Panc1 (cell line): ENCODE measurements at regions of chr2 and their contacts with region 1.

Region 1: GRCh38 chr2:42764901-42765300 is 966 bp upstream of the OXER1 start:
- DNase-seq: no peak
- ATAC-seq: no peak
- H3K4me3 ChIP-seq: no peak overlapping the region
- H3K27ac ChIP-seq: no peak overlapping the region
- H3K4me1 ChIP-seq: no peaks in the 10 kb centered on the region
- H3K27me3 ChIP-seq: no peaks in the 10 kb centered on the region
- CTCF ChIP-seq: no peak

Region 2: GRCh38 chr2:42663106-42663780 is 101.7 kb before region 1 on chr2:
- CTCF ChIA-PET with region 1: no interaction called
- POLR2A ChIA-PET with region 1: no interaction called
- in situ Hi-C with region 1: no loop called
- intact Hi-C with region 1: no loop called
- DNase-seq: peak; percentile 73
- ATAC-seq: peak; percentile 96
- H3K4me3 ChIP-seq: no peak overlapping the region
- H3K27ac ChIP-seq: no peak overlapping the region
- H3K4me1 ChIP-seq: no peaks in the 10 kb centered on the region
- H3K27me3 ChIP-seq: no peaks in the 10 kb centered on the region
- CTCF ChIP-seq: peak; percentile 99

Region 3: GRCh38 chr2:42775810-42776209 is 10.9 kb after region 1 on chr2:
- CTCF ChIA-PET with region 1: interaction called, 10 read pairs
- POLR2A ChIA-PET with region 1: no interaction called
- in situ Hi-C with region 1: no loop called
- intact Hi-C with region 1: no loop called
- DNase-seq: no peak
- ATAC-seq: no peak
- H3K4me3 ChIP-seq: no peak overlapping the region
- H3K27ac ChIP-seq: no peak overlapping the region
- H3K4me1 ChIP-seq: no peaks in the 10 kb centered on the region
- H3K27me3 ChIP-seq: no peaks in the 10 kb centered on the region
- CTCF ChIP-seq: no peak